Heart right ventricle (tissue), 16 donors: ENCODE measurements at regions of chr10 and their contacts with region 1.

Region 1: GRCh38 chr10:71285180-71285545 is 33.9 kb upstream of the SLC29A3 start:
- DNase-seq: no peak
- ATAC-seq: peak; percentile 47 to 74 (median 64)
- H3K4me3 ChIP-seq: no peak overlapping the region
- H3K27ac ChIP-seq: no peak overlapping the region
- H3K4me1 ChIP-seq: peaks cover 0 to 15% (median 4%) of the 10 kb centered on the region in 9 donors
- H3K27me3 ChIP-seq: no peaks in the 10 kb centered on the region
- CTCF ChIP-seq: peak; percentile 68 to 89 (median 78)

Region 2: DNA sequence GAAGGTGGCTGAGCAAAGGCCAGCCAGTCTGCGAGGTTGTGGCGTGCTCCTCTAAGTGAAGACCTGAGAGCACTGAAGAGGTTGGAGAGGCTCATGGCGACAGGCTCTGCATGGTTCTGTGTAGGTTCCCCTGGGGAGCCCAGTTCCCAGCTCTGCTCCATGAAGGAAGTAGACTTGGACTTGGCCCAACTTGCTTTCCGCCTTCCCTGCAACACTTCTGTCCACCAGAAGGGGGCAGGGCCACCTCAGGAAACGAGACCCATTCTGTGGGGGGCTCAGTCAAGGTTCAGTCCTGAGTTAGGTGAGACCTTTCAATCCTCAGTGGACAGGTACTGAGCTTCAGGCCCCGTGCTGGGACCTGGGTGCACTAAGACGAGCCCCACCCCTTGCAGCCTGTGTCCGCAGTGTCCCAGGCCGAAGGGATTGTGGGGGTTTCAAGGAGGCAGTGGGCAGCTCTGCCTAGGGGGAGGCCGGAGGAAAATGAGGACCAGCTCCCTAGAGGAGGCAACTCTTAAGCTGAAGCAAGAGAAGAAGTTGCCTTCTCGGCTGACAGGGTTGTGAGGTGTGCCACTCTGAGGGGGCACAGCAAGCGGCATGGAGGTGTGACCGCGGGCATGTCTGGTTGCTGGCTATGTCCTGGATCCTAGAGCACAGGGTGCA is 381.8 kb before region 1 on chr10:
- intact Hi-C with region 1: loop called in 7 of 10 experiments (anchors 1 to 5 kb)
- DNase-seq: peak; percentile 59 to 77
- ATAC-seq: peak; percentile 31 to 78 (median 74)
- H3K4me3 ChIP-seq: peak overlapping the region in 1 of 10 donors; percentile 10
- H3K27ac ChIP-seq: no peak overlapping the region
- H3K4me1 ChIP-seq: peaks cover 0 to 24% (median 11%) of the 10 kb centered on the region in 9 donors
- H3K27me3 ChIP-seq: peaks cover 0 to 5% (median 0%) of the 10 kb centered on the region in 7 donors
- CTCF ChIP-seq: peak; percentile 86 to 96 (median 93)

Region 3: GRCh38 chr10:70925377-70926225 is 359.6 kb before region 1 on chr10:
- intact Hi-C with region 1: loop called in 8 of 10 experiments (anchors 2 to 5 kb)
- DNase-seq: peak; percentile 32 to 62
- ATAC-seq: peak; percentile 65 to 87 (median 83)
- H3K4me3 ChIP-seq: no peak overlapping the region
- H3K27ac ChIP-seq: peak overlapping the region in 1 of 10 donors; percentile 55
- H3K4me1 ChIP-seq: peaks cover 0 to 13% (median 4%) of the 10 kb centered on the region in 9 donors
- H3K27me3 ChIP-seq: peaks cover 0 to 10% (median 0%) of the 10 kb centered on the region in 7 donors
- CTCF ChIP-seq: peak; percentile 83 to 99 (median 94)

Region 4: DNA sequence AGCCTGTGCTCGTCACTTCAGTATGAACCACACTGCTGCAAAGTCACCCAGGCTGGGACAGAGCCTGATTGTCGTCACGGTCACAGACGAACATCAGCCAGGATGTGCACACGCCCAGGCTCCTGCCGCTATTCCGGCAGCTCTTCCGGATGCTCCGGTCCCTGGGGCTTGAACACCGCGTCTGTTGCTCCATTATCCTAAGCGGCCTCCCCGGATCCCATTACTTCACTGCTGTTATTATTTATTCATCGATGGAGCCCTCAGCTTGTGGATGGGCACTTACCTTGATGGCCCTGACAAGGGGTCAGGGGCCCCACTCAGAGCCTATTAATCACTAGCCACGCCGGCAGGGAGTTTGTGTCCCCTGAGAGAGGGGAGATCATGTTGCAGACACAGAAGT is 276.0 kb before region 1 on chr10:
- intact Hi-C with region 1: loop called in 1 of 10 experiments (anchors 10 kb)
- DNase-seq: no peak
- ATAC-seq: peak in 3 of 8 donors; percentile 20 to 65 (median 24)
- H3K4me3 ChIP-seq: no peak overlapping the region
- H3K27ac ChIP-seq: no peak overlapping the region
- H3K4me1 ChIP-seq: peaks cover 0 to 20% (median 10%) of the 10 kb centered on the region in 9 donors
- H3K27me3 ChIP-seq: peaks cover 0 to 4% (median 0%) of the 10 kb centered on the region in 7 donors
- CTCF ChIP-seq: no peak

Region 5: DNA sequence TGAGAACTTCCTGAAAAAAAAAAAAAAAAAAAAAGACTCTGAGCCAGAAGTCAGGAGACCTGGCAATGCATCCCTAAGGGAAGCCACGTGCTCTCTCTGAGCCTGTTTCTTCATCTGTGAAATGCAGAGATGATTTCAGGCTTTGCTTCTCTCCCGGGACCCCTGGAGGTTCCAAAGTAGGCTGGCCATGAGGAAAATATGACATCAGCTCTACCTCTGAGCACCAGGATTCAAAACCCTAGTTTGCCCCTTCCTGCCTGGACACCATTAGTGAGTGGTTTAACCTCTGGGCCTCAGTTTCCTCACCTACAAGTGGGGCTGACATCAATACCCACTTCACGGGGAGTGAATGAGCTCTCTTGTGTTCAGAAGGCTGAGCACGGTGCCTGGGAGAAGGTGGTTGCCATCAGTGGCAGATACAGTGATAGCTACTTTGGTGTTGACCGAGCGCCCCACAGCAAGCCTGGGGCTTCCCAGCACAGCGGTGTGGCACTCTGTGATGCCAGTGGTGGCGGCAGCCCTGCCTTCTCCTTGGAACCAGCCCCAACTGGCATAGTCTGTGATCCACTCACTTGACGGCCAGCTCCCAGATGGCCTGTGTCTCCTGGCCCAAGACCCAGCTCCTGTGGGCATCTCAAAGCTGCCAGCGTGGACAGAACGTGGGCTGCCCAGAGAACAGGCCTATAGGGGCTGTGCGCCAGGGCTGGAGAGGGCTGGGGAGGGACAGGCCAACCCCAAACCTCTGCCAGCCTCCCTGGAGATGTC is 225.9 kb before region 1 on chr10:
- intact Hi-C with region 1: no loop called
- DNase-seq: peak in 1 of 2 donors; percentile 48
- ATAC-seq: peak; percentile 25 to 68 (median 44)
- H3K4me3 ChIP-seq: no peak overlapping the region
- H3K27ac ChIP-seq: no peak overlapping the region
- H3K4me1 ChIP-seq: peaks cover 0 to 28% (median 11%) of the 10 kb centered on the region in 9 donors
- H3K27me3 ChIP-seq: no peaks in the 10 kb centered on the region
- CTCF ChIP-seq: no peak

Region 6: GRCh38 chr10:71371750-71372166 is 86.6 kb after region 1 on chr10:
- intact Hi-C with region 1: no loop called
- DNase-seq: no peak
- ATAC-seq: peak in 3 of 8 donors; percentile 36 to 51 (median 39)
- H3K4me3 ChIP-seq: no peak overlapping the region
- H3K27ac ChIP-seq: peak overlapping the region in 1 of 10 donors; percentile 83
- H3K4me1 ChIP-seq: peaks cover 0 to 67% (median 3%) of the 10 kb centered on the region in 9 donors
- H3K27me3 ChIP-seq: peaks cover 0 to 12% (median 0%) of the 10 kb centered on the region in 7 donors
- CTCF ChIP-seq: no peak